ENCODE measurements at regions of chr19 and their contacts with region 1.

Region 1: GRCh38 chr19:48674921-48675824 is 2.4 kb upstream of the NTN5 start:
- H3K4me3 ChIP-seq: no peak overlapping the region
- H3K27ac ChIP-seq: no peak overlapping the region
- H3K4me1 ChIP-seq: no peaks in the 10 kb centered on the region; the same call in 1 of the 2 replicates
- CTCF ChIP-seq: peak; percentile 90

Region 2: GRCh38 chr19:48578891-48579290 is 96.3 kb before region 1 on chr19:
- CTCF ChIA-PET with region 1: no interaction called
- POLR2A ChIA-PET with region 1: no interaction called
- H3K4me3 ChIP-seq: no peak overlapping the region
- H3K27ac ChIP-seq: no peak overlapping the region
- H3K4me1 ChIP-seq: no peaks in the 10 kb centered on the region; the same call in 1 of the 2 replicates
- CTCF ChIP-seq: no peak

Region 3: DNA sequence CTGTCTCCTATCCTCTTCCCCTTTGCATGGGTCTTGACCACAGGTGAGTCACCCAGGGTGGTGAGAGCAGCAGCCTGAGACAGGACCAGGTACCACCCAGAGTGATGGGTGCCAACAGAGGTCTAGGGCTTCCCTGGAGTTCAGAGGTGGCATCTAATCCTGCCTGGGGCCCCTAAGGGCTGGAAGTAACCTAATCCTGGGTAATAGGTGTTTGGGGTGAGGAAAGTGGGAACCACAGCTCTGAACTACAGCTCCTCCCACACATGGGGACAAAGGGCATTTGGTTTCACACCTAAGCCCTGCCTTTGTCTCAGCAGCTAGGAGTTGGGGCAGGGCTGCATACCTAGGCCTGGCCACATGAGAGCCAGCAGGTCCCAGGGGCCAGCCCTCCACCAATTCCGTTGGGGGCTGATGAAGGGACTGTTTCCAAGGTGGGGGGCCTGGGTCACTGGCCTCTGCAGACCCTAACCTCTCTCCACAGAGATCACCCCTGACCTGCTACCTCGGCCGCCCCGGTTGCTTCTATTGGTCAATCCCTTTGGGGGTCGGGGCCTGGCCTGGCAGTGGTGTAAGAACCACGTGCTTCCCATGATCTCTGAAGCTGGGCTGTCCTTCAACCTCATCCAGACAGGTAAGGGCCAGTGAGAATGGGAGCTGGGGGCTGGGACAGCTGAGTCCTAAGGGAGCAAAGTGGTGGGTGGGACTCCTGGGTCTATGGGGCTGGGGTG is 47.8 kb before region 1 on chr19:
- CTCF ChIA-PET with region 1: no interaction called
- POLR2A ChIA-PET with region 1: no interaction called
- H3K4me3 ChIP-seq: no peak overlapping the region
- H3K27ac ChIP-seq: no peak overlapping the region
- H3K4me1 ChIP-seq: peaks cover 10% of the 10 kb centered on the region
- CTCF ChIP-seq: no peak

Region 4: GRCh38 chr19:48646001-48646721 is 29.0 kb before region 1 on chr19 and contains the start of gene CA11:
- CTCF ChIA-PET with region 1: interaction called, 27 read pairs
- POLR2A ChIA-PET with region 1: interaction called, 3 read pairs
- H3K4me3 ChIP-seq: peak within 1 kb of the TSS; percentile 44
- H3K27ac ChIP-seq: peak within 1 kb of the TSS; percentile 70
- H3K4me1 ChIP-seq: peaks cover 9% of the 10 kb centered on the region
- CTCF ChIP-seq: peak; percentile 96

Region 5: GRCh38 chr19:48656840-48657474 is 18.2 kb before region 1 on chr19:
- CTCF ChIA-PET with region 1: interaction called, 12 read pairs
- POLR2A ChIA-PET with region 1: no interaction called
- H3K4me3 ChIP-seq: no peak overlapping the region
- H3K27ac ChIP-seq: no peak overlapping the region
- H3K4me1 ChIP-seq: peaks cover 9% of the 10 kb centered on the region
- CTCF ChIP-seq: no peak

Region 6: DNA sequence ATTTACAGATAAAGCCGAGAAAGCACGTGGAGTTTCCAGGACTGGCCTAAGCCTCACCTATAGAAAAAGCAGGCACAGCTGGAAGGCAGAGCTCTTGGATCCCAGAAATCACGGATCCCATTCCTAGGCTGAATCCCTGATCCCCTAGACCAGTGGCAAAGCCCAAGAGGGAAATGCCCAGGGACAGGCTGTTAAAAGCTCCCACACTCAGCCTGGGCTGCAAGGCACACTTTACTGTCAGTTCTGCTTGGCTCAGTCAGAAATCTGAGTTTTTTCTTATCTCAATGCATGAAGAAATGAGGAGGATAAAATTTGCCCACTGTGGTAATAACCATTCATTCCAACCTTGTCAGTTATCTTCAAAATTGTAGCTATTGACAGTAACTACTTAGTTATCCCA is 12.6 kb after region 1 on chr19:
- CTCF ChIA-PET with region 1: interaction called, 10 read pairs
- POLR2A ChIA-PET with region 1: interaction called, 4 read pairs
- H3K4me3 ChIP-seq: no peak overlapping the region
- H3K27ac ChIP-seq: no peak overlapping the region
- H3K4me1 ChIP-seq: no peaks in the 10 kb centered on the region; the same call in 1 of the 2 replicates
- CTCF ChIP-seq: no peak

Region 7: GRCh38 chr19:48713864-48714758 is 38.9 kb after region 1 on chr19:
- CTCF ChIA-PET with region 1: interaction called, 35 read pairs
- POLR2A ChIA-PET with region 1: interaction called, 3 read pairs
- H3K4me3 ChIP-seq: peak overlapping the region; percentile 67
- H3K27ac ChIP-seq: peak overlapping the region; percentile 67
- H3K4me1 ChIP-seq: peaks cover 13% of the 10 kb centered on the region
- CTCF ChIP-seq: no peak

Region 8: DNA sequence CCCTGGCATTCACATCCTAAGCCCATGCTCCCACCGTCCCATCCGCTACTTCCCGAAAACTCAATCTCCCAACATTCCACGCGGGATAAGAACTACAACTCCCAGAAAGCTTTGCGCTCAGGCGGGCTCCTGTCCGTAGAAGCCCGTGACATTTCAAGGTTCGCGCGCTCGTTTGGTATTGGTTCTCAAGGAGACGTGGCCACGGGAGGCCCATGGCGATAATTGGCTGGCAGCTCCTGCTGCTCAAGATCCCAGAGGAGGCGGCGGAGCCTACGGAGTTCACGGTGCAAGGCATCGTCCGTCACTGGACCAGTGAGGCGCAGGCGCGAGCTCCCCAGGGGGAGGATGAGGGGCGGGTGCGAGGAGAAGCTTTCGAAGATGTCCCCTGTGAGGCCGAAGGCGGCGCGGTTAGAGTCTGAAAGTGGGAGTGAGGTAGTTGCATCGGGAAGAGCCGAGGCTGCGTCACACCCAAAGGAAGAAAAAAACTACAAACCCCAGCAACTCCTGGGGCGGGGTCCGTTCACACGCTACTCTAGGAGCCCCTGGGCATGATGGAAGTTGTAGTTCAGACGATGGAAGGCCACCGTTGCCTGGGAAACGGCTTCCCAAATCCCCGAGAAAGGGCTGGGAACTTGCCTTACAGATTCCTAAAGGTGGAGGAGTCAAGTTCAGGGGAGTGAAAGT is 45.6 kb after region 1 on chr19:
- CTCF ChIA-PET with region 1: interaction called, 12 read pairs
- POLR2A ChIA-PET with region 1: interaction called, 5 read pairs
- H3K4me3 ChIP-seq: peak overlapping the region; percentile 74
- H3K27ac ChIP-seq: peak overlapping the region; percentile 75
- H3K4me1 ChIP-seq: no peaks in the 10 kb centered on the region; the same call in 1 of the 2 replicates
- CTCF ChIP-seq: no peak

Region 9: GRCh38 chr19:48738557-48739399 is 63.6 kb after region 1 on chr19:
- CTCF ChIA-PET with region 1: interaction called, 31 read pairs
- POLR2A ChIA-PET with region 1: interaction called, 7 read pairs
- H3K4me3 ChIP-seq: peak overlapping the region; percentile 36
- H3K27ac ChIP-seq: peak overlapping the region; percentile 77; the same call in 1 of the 2 replicates
- H3K4me1 ChIP-seq: peaks cover 5% of the 10 kb centered on the region
- CTCF ChIP-seq: no peak

Region 10: DNA sequence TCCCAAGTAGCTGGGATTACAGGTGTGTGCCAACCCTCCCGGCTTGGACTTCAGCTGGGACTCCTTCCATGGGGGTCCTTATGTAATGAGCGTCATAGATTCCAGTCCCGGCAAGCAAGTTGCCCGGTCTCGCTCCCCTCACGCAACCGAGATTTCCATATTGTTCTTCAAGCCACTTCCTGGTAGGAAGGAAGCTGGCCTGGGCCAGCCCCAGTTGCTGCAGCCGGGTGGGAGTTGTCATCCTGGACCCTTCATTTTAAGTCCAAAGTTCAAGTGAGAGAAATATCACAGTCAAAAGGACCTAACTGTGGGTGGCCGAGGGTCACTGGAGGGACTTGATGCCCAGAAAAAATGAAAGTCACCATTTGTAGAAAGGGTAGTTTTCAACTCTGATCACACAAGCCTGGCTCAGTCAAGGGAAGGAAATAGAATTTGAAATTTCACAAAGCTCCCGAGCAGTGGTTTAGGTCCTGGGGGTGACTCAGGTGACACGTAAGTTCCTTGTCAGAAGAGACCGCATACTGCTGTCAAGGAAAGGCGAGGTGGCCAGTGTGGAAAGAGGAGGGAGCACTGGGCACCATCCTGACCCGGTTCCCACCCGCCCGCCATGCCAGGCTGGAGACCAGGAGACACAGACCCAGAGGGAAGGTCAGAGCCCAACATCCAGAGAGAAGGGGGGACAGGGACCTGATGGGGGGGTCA is 85.5 kb after region 1 on chr19:
- CTCF ChIA-PET with region 1: no interaction called
- POLR2A ChIA-PET with region 1: no interaction called
- H3K4me3 ChIP-seq: no peak overlapping the region
- H3K27ac ChIP-seq: no peak overlapping the region
- H3K4me1 ChIP-seq: no peaks in the 10 kb centered on the region
- CTCF ChIP-seq: no peak

Measured in HEK293 (cell line).